HEK293T (cell line): ENCODE measurements at regions of chr3 and their contacts with region 1.

Region 1: DNA sequence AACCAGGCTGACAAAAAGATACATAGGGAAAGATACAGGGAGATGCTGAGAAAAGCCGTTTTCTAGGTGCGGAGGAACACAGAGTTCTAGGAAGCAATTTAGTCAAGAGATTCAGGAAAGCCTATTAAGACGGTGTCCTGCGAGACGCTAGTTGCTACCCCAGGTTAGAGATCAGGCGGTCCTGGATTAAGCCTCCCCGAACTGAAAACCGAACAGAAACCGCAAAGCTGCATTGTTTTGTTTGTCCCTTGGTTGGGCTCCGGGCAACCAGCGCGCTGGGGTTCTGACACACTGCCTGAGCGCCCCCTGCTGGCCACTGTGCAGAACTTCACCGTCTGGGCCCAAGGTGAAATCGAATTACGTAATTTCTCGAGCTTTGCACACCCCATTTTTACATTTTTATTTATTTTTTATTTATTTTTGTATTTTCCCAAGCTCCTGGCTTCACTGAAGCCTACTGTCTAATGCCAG is 37.3 kb upstream of the NDUFB4 start:
- DNase-seq: peak; percentile 80

Region 2: GRCh38 chr3:120245386-120245785 is 313.4 kb before region 1 on chr3:
- CTCF ChIA-PET with region 1: interaction called, 16 read pairs
- POLR2A ChIA-PET with region 1: no interaction called
- DNase-seq: no peak

Region 3: GRCh38 chr3:120544361-120544760 is 14.4 kb before region 1 on chr3:
- CTCF ChIA-PET with region 1: no interaction called
- POLR2A ChIA-PET with region 1: no interaction called
- DNase-seq: no peak

Region 4: DNA sequence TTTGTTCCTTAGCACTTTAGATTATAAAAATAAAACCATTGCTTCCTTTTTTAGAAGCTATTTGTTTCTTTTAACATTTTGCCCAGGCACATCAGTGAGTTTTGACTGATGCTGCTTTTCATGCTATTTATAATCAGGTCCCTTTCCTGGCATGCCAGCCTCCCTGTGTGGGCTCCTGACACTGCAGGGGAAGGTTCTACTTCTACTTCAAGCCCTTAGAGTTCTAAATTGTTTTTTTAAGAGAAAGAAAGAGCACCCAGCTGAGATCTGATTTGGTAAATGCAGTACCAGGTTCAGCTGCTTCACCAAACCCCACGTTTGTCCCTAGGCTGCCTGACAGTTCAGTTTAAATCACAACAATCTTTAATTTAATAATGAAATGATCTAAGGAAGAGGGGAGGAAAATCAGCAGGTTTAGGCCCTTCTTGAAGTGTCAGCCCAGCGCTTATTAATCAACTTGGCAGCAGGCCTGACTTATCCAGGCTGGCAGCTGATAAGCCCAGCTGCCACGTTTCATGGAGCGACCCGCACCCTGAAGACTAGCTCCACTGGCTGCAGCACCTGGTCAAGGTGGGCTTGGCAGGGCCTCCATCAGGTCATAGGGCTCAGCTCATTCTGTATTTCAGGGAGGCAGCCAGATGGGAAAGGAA is 94.2 kb after region 1 on chr3:
- CTCF ChIA-PET with region 1: no interaction called
- POLR2A ChIA-PET with region 1: no interaction called
- DNase-seq: no peak